ENCODE measurements at regions of chr1 and their contacts with region 1.

Region 1: GRCh38 chr1:111719674-111720132 is 19.5 kb downstream of the INKA2 start:
- DNase-seq: no peak
- CTCF ChIP-seq: no peak

Region 2: GRCh38 chr1:111733183-111733991 is 13.7 kb after region 1 on chr1:
- CTCF ChIA-PET with region 1: interaction called, 51 read pairs
- POLR2A ChIA-PET with region 1: no interaction called
- DNase-seq: no peak
- CTCF ChIP-seq: no peak

Region 3: DNA sequence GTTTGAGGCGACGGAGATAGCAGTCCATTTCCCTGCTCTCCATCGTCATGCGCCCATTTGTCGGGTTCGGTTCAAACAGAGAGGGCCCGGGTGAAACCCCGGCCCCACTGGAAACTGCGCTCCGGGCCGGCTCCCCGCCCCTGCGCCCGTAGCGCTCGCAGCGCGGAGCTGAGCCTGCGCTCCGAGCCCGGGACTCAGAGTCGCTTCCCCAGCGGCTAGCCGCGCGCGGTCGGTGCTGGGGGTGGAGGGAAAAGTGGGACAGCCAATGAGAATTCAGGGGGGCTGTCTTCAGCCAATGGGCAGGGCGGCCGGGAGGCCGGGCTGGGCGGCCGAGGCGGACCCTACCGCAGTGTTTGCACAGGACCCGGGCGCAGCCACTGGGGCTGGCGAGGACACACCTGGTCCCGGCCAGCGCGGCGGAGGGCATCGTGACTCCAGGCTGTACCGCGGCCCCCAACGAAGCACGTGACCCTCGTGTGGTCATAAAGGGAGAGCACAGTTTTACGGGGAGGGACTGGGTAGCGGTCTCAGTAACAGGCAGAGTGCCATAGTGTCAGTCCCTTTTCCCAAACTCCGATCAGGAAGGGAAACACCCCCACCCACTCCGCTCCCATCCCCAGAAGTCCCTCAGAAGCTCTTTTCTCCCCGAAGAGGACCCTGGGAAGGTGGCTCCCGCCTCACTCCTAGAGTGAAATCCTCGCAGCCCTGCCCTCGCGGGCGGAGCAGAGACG is 19.7 kb after region 1 on chr1 and contains the start of gene INKA2:
- CTCF ChIA-PET with region 1: interaction called, 66 read pairs
- POLR2A ChIA-PET with region 1: no interaction called
- DNase-seq: peak; percentile 94
- CTCF ChIP-seq: no peak

Region 4: DNA sequence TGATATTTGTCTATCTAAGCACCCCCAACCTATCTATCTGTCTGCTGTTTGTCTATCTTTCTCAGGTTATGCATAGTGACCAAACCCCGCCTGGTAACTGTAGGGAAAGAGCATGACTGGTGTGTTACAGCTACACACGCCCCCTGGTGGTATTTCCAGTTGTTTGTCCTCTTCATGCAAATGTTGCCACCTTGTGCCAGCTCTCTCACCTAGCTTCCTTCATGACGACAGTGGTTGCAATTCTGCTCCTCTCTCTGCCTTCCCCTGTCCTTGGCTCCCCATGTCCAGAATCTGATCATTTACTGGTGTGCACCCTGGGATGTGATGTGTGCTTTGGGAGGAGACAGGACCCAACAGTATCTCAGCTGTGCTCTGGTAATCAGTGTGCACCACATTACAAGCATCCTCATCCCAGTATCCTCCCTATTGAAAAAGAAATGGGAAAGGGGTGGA is 27.6 kb after region 1 on chr1:
- CTCF ChIA-PET with region 1: interaction called, 66 read pairs
- POLR2A ChIA-PET with region 1: no interaction called
- DNase-seq: peak; percentile 73
- CTCF ChIP-seq: peak; percentile 76

Region 5: DNA sequence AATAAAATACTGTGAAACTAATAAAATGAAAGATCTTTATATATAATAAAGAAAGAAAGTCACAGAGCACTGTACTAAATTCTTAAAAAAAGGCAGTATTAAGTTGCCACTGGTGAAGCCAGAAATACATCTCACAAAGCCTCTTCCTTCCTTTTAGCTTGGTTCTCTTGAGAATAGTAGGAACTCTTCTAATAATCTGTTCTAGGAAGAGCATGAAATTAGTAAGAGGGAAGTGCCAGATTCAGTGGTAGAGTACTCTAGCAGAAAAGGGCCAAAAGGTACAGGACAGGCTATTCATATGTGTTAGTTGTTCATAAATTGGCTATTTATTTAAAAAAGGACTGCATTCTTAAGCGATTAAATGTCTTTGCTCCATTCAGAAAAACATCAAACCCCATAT is 710.0 kb after region 1 on chr1:
- CTCF ChIA-PET with region 1: no interaction called
- POLR2A ChIA-PET with region 1: no interaction called
- DNase-seq: no peak
- CTCF ChIP-seq: no peak

Measured in GM10248 (cell line).